Psoas muscle (tissue), 8 donors: ENCODE measurements at regions of chr18 and their contacts with region 1.

Region 1: GRCh38 chr18:58257461-58257860 is 213.4 kb downstream of the NEDD4L start:
- DNase-seq: no peak
- ATAC-seq: peak; percentile 23 to 59 (median 38)
- H3K4me3 ChIP-seq: peak overlapping the region; percentile 72
- H3K27ac ChIP-seq: peak overlapping the region; percentile 93
- H3K4me1 ChIP-seq: peaks cover 29% of the 10 kb centered on the region
- H3K27me3 ChIP-seq: no peaks in the 10 kb centered on the region
- CTCF ChIP-seq: no peak

Region 2: DNA sequence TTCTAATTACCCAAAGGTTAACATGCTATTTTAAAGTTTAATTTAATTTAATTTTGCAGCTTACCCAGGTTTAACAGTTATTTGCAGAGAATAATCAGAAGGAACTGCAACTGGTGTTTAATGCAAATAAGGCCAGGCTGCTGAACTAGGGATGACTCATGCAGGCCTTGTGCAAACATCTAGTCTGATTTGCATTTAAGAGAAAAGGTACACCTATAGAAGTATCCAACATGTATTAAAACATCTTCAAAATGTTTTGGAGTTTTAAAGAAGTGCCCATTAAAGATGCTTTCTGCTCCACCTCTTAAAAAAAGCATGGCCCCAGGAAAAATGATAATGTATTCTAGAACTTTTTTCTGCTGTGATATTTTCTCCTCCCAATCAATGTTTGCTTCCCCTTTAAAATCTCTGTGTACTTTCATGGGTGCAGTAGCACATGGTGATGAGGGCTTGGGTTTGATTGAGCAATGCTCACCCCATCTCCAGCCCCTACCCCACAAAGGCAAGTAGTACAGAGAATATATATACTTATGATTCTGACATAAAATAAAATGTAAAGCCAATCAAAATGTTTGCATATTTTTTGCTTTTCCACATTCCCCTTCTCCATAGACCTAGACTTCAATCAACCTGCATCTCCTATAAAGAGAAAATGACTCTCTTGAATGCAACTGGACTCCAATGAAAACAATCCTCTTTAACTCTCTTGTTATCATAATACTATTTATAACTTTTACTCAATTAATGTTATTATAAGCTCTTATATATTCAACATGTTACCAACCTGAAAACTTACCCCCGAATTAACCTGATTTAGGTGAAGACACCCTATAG is 508.5 kb before region 1 on chr18:
- intact Hi-C with region 1: no loop called
- DNase-seq: no peak
- ATAC-seq: peak in 3 of 4 donors; percentile 57 to 68 (median 67)
- H3K4me3 ChIP-seq: no peak overlapping the region
- H3K27ac ChIP-seq: peak overlapping the region; percentile 74
- H3K4me1 ChIP-seq: peaks cover 44% of the 10 kb centered on the region
- H3K27me3 ChIP-seq: no peaks in the 10 kb centered on the region
- CTCF ChIP-seq: no peak

Region 3: GRCh38 chr18:58087917-58088692 is 169.4 kb before region 1 on chr18:
- intact Hi-C with region 1: no loop called
- DNase-seq: no peak
- ATAC-seq: peak in 2 of 4 donors; percentile 21 to 34
- H3K4me3 ChIP-seq: no peak overlapping the region
- H3K27ac ChIP-seq: no peak overlapping the region
- H3K4me1 ChIP-seq: no peaks in the 10 kb centered on the region
- H3K27me3 ChIP-seq: no peaks in the 10 kb centered on the region
- CTCF ChIP-seq: no peak

Region 4: GRCh38 chr18:58158008-58158407 is 99.5 kb before region 1 on chr18:
- intact Hi-C with region 1: no loop called
- DNase-seq: no peak
- ATAC-seq: no peak
- H3K4me3 ChIP-seq: no peak overlapping the region
- H3K27ac ChIP-seq: no peak overlapping the region
- H3K4me1 ChIP-seq: peaks cover 5% of the 10 kb centered on the region
- H3K27me3 ChIP-seq: no peaks in the 10 kb centered on the region
- CTCF ChIP-seq: no peak

Region 5: GRCh38 chr18:58202406-58202730 is 55.1 kb before region 1 on chr18:
- intact Hi-C with region 1: no loop called
- DNase-seq: no peak
- ATAC-seq: peak in 1 of 4 donors; percentile 20
- H3K4me3 ChIP-seq: no peak overlapping the region
- H3K27ac ChIP-seq: no peak overlapping the region
- H3K4me1 ChIP-seq: peaks cover 1% of the 10 kb centered on the region
- H3K27me3 ChIP-seq: no peaks in the 10 kb centered on the region
- CTCF ChIP-seq: no peak

Region 6: GRCh38 chr18:58290116-58290695 is 32.7 kb after region 1 on chr18:
- intact Hi-C with region 1: loop called in 1 of 2 experiments (anchors 5 kb)
- DNase-seq: no peak
- ATAC-seq: no peak
- H3K4me3 ChIP-seq: no peak overlapping the region
- H3K27ac ChIP-seq: no peak overlapping the region
- H3K4me1 ChIP-seq: peaks cover 56% of the 10 kb centered on the region
- H3K27me3 ChIP-seq: no peaks in the 10 kb centered on the region
- CTCF ChIP-seq: no peak

Region 7: DNA sequence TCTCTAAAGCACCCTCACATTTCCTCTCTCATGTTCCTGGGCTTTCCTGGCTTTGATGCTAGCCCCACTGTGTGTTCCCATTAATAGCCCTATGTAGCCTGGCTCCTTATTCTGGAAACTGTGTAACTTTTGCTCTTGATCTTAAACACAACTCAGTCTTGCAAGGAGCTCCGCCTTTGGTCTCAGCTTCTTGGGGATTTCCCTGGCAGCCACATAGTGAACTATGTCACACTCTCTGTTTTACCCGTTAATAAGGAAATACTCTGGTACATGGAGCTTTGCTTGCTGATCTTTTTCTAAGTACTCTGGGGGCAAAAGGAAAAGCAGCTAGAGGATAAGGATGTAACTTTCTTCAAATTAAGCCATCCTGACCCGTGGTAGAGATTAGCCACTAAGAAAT is 45.9 kb after region 1 on chr18:
- intact Hi-C with region 1: loop called in 1 of 2 experiments (anchors 5 kb)
- DNase-seq: no peak
- ATAC-seq: no peak
- H3K4me3 ChIP-seq: no peak overlapping the region
- H3K27ac ChIP-seq: no peak overlapping the region
- H3K4me1 ChIP-seq: peaks cover 48% of the 10 kb centered on the region
- H3K27me3 ChIP-seq: no peaks in the 10 kb centered on the region
- CTCF ChIP-seq: no peak

Region 8: GRCh38 chr18:58314284-58314683 is 56.8 kb after region 1 on chr18:
- intact Hi-C with region 1: loop called in 1 of 2 experiments (anchors 5 kb)
- DNase-seq: peak; percentile 53 to 71
- ATAC-seq: peak; percentile 66 to 79 (median 76)
- H3K4me3 ChIP-seq: no peak overlapping the region
- H3K27ac ChIP-seq: peak overlapping the region; percentile 27
- H3K4me1 ChIP-seq: peaks cover 62% of the 10 kb centered on the region
- H3K27me3 ChIP-seq: no peaks in the 10 kb centered on the region
- CTCF ChIP-seq: no peak